ENCODE measurements at regions of chr4 and their contacts with region 1.

Region 1: GRCh38 chr4:7067452-7068278 is at the start of gene GRPEL1:
- DNase-seq: peak in 4 of 5 donors; percentile 99 to 100 (median 100)
- ATAC-seq: peak; percentile 97 to 99 (median 98)
- H3K4me3 ChIP-seq: peak within 1 kb of the TSS; percentile 70 to 99 (median 88)
- H3K27ac ChIP-seq: peak within 1 kb of the TSS; percentile 62 to 97 (median 91)
- H3K4me1 ChIP-seq: peaks cover 3 to 41% (median 22%) of the 10 kb centered on the region in 12 donors
- H3K27me3 ChIP-seq: no peaks in the 10 kb centered on the region
- CTCF ChIP-seq: peak in 1 of 12 donors; percentile 26
- POLR2A ChIP-seq: peak; percentile 97 to 99
- total RNA-seq, gene GRPEL1: 38.6 to 68.1 (median 55.4) TPM

Region 2: DNA sequence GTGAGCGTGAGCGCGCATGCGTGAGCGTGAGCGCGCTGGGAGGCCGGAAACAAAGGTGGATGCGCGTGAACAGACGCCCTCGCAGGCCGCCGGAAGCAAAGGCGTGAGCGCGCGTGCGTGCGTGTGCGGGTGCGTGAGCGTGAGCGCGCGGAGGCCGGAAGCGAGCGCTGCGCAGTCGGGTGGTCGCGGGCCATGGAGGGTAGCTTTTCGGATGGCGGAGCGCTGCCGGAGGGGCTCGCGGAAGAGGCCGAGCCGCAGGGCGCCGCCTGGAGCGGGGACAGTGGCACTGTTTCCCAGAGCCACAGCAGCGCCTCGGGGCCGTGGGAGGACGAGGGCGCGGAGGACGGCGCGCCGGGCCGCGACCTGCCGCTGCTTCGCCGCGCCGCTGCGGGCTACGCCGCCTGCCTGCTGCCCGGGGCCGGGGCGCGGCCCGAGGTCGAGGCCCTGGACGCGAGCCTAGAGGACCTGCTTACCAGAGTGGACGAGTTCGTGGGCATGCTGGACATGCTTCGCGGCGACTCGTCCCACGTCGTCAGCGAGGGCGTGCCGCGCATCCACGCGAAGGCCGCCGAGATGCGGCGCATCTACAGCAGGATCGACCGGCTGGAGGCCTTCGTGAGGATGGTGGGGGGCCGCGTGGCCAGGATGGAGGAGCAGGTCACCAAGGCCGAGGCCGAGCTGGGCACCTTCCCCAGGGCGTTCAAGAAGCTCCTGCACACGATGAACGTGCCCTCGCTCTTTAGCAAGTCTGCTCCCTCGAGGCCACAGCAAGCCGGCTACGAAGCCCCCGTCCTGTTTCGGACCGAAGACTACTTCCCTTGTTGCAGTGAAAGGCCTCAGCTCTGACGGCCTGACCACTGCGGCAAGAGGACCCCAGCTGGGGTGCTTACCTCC is 351.4 kb before region 1 on chr4 and contains the start of gene BLOC1S4:
- intact Hi-C with region 1: loop called (anchors 1 to 5 kb)
- DNase-seq: peak; percentile 88 to 94 (median 91)
- ATAC-seq: peak; percentile 84 to 94 (median 93)
- H3K4me3 ChIP-seq: peak within 1 kb of the TSS; percentile 64 to 94 (median 76)
- H3K27ac ChIP-seq: peak within 1 kb of the TSS; percentile 80 to 97 (median 94)
- H3K4me1 ChIP-seq: peaks cover 6 to 38% (median 27%) of the 10 kb centered on the region in 12 donors
- H3K27me3 ChIP-seq: no peaks in the 10 kb centered on the region
- CTCF ChIP-seq: peak in 5 of 12 donors; percentile 13 to 36 (median 16)
- POLR2A ChIP-seq: peak in 1 of 2 donors; percentile 84
- total RNA-seq, gene BLOC1S4: 5.8 to 14.1 (median 7.8) TPM

Region 3: GRCh38 chr4:6892190-6892908 is 175.3 kb before region 1 on chr4:
- intact Hi-C with region 1: loop called in 1 of 10 experiments (anchors 5 kb)
- DNase-seq: peak in 4 of 5 donors; percentile 46 to 71 (median 64)
- ATAC-seq: peak; percentile 30 to 79 (median 57)
- H3K4me3 ChIP-seq: peak overlapping the region in 6 of 12 donors; percentile 1 to 34 (median 8)
- H3K27ac ChIP-seq: peak overlapping the region in 4 of 12 donors; percentile 6 to 60 (median 14)
- H3K4me1 ChIP-seq: peaks cover 0 to 50% (median 12%) of the 10 kb centered on the region in 12 donors
- H3K27me3 ChIP-seq: no peaks in the 10 kb centered on the region
- CTCF ChIP-seq: peak in 4 of 12 donors; percentile 6 to 30 (median 16)
- POLR2A ChIP-seq: no peak

Region 4: GRCh38 chr4:6909073-6909965 is 158.3 kb before region 1 on chr4 and contains the start of gene TBC1D14:
- intact Hi-C with region 1: loop called (anchors 1 to 10 kb)
- DNase-seq: peak; percentile 90 to 95 (median 91)
- ATAC-seq: peak; percentile 71 to 95 (median 94)
- H3K4me3 ChIP-seq: peak within 1 kb of the TSS; percentile 54 to 99 (median 90)
- H3K27ac ChIP-seq: peak within 1 kb of the TSS; percentile 95 to 100 (median 99)
- H3K4me1 ChIP-seq: peaks cover 4 to 57% (median 34%) of the 10 kb centered on the region in 12 donors
- H3K27me3 ChIP-seq: no peaks in the 10 kb centered on the region
- CTCF ChIP-seq: peak in 7 of 12 donors; percentile 15 to 45 (median 31)
- POLR2A ChIP-seq: peak in 1 of 2 donors; percentile 55
- total RNA-seq, gene TBC1D14: 31.3 to 51.0 (median 34.5) TPM

Region 5: GRCh38 chr4:6974138-6974848 is 93.4 kb before region 1 on chr4:
- intact Hi-C with region 1: loop called in 9 of 10 experiments (anchors 1 to 10 kb)
- DNase-seq: peak; percentile 79 to 83 (median 81)
- ATAC-seq: peak; percentile 81 to 92 (median 92)
- H3K4me3 ChIP-seq: no peak overlapping the region
- H3K27ac ChIP-seq: peak overlapping the region in 1 of 12 donors; percentile 13
- H3K4me1 ChIP-seq: peaks cover 0 to 24% (median 0%) of the 10 kb centered on the region in 12 donors
- H3K27me3 ChIP-seq: no peaks in the 10 kb centered on the region
- CTCF ChIP-seq: peak; percentile 92 to 98 (median 96)
- POLR2A ChIP-seq: no peak

Region 6: GRCh38 chr4:7042697-7043464 is 24.8 kb before region 1 on chr4 and contains the start of gene TADA2B:
- intact Hi-C with region 1: loop called in 7 of 10 experiments (anchors 1 to 2 kb)
- DNase-seq: peak; percentile 96 to 99 (median 98)
- ATAC-seq: peak; percentile 93 to 97 (median 95)
- H3K4me3 ChIP-seq: peak within 1 kb of the TSS; percentile 86 to 99 (median 99)
- H3K27ac ChIP-seq: peak within 1 kb of the TSS; percentile 79 to 95 (median 92)
- H3K4me1 ChIP-seq: peaks cover 8 to 56% (median 45%) of the 10 kb centered on the region in 12 donors
- H3K27me3 ChIP-seq: no peaks in the 10 kb centered on the region
- CTCF ChIP-seq: peak in 11 of 12 donors; percentile 17 to 60 (median 47)
- POLR2A ChIP-seq: peak in 1 of 2 donors; percentile 34
- total RNA-seq, gene TADA2B: 24.5 to 40.2 (median 30.8) TPM

Measured in heart left ventricle (tissue), 16 donors.